Ascending aorta (tissue), 2 donors: ENCODE measurements at regions of chr7 and their contacts with region 1.

Region 1: GRCh38 chr7:85068799-85069198 is 118.1 kb downstream of the SEMA3D start:
- DNase-seq: no peak
- H3K4me3 ChIP-seq: no peak overlapping the region
- H3K27ac ChIP-seq: peak overlapping the region in 1 of 2 donors; percentile 41
- H3K4me1 ChIP-seq: peaks cover 0 to 21% of the 10 kb centered on the region in 2 donors
- H3K27me3 ChIP-seq: no peaks in the 10 kb centered on the region
- CTCF ChIP-seq: no peak

Region 2: DNA sequence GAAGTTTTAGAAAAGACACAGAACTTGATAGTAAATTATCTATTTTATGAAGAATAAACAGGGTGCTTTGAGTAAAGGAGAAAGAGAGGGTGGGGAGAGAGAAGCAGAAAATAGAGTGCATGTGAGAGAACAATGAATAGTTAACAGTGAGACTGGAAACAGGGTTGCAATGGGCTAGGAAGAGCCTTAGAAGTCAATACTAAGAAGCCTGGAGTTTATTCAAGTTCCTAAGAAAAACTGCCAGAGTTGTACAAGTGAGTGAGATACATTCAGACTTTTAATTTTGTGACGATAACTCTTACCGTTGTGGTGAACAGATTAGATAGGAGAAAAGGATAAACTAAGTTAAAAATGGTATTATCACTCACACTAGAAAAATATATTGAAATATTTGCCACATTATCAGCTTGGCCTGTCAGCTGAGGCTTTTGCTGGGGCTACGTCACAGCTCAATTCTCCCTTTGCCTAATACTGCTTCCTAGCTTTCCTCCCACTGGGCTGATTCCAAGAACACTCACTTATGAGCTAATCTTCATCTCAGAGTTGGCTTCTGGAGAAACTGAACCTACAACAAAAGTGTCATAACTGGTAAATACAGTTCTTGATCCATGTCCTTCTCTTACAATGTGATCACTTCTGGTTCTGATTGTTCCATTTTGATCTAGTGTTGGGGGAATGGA is 25.4 kb after region 1 on chr7:
- intact Hi-C with region 1: loop called (anchors 2 kb)
- DNase-seq: peak; percentile 10 to 81
- H3K4me3 ChIP-seq: no peak overlapping the region
- H3K27ac ChIP-seq: peak overlapping the region; percentile 76 to 77
- H3K4me1 ChIP-seq: no peaks in the 10 kb centered on the region
- H3K27me3 ChIP-seq: no peaks in the 10 kb centered on the region
- CTCF ChIP-seq: no peak